Sigmoid colon (tissue), 7 donors: ENCODE measurements at regions of chr7 and their contacts with region 1.

Region 1: GRCh38 chr7:87886875-87887274 is 10.6 kb downstream of the DBF4 start:
- DNase-seq: no peak
- H3K4me3 ChIP-seq: no peak overlapping the region
- H3K27ac ChIP-seq: no peak overlapping the region
- H3K4me1 ChIP-seq: no peaks in the 10 kb centered on the region
- H3K27me3 ChIP-seq: no peaks in the 10 kb centered on the region
- CTCF ChIP-seq: peak in 3 of 4 experiments; percentile 19 to 32 (median 26)
- EP300 ChIP-seq: no peak
- POLR2A ChIP-seq: no peak

Region 2: DNA sequence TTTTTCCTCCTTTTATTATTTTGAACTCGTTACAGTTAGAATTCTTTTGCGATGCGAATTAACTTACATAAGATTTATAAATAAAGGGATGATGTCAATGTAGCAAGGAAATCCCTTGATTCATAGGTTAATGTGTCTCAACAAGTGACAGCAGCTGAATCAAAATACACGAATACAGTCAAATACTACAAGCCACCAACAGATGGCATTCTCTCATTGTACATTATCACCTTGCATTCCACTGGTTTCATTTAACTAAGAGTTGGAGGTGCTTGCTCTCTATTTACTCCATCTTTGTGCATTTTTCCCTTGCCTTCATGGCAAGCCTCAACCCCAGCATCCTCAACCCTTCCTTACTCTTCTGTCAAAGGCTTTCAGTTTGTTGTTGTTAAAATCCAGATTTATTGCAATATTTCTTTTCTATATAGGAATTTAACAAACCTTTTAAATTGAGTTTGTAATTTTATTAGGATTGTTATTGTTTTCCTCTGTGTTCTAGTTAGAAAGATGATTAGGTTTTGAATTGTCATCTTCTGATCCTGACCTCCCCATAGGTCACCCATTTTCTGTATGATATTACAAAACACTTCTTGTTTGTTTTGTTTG is 89.0 kb before region 1 on chr7:
- intact Hi-C with region 1: loop called (anchors 5 kb)
- DNase-seq: no peak
- H3K4me3 ChIP-seq: no peak overlapping the region
- H3K27ac ChIP-seq: no peak overlapping the region
- H3K4me1 ChIP-seq: no peaks in the 10 kb centered on the region
- H3K27me3 ChIP-seq: no peaks in the 10 kb centered on the region
- CTCF ChIP-seq: peak in 3 of 4 experiments; percentile 32 to 44 (median 41)
- EP300 ChIP-seq: no peak
- POLR2A ChIP-seq: no peak